MCF 10A (cell line): ENCODE measurements at regions of chr11 and their contacts with region 1.

Region 1: DNA sequence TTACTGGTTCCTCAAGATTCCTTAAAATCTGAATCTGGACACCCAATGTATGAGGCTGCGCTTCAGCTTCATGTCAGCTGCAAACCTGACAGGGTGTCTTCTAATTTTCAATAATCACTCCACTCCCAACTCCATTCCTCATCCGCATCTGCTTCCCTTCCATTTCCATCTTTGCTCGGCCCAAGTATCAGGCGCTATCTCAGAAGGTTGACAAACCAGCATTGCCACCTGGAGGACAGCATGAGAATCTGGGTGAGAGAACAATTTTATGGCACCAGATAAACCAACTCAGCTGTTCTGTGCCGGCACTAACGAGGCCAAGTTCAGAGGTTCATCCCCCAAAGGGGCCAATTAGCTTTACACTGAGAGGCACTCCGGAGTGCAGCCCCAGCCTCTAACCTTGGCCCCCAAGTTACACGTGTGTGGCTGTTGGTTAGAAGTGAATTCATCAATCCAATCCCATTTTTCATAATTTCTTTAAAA is 79.1 kb upstream of the LMO2 start:
- DNase-seq: peak; percentile 66
- H3K4me3 Mint-ChIP-seq: no peak overlapping the region
- H3K27ac Mint-ChIP-seq: no peak overlapping the region
- H3K4me1 Mint-ChIP-seq: no peaks in the 10 kb centered on the region
- H3K27me3 Mint-ChIP-seq: no peaks in the 10 kb centered on the region
- CTCF ChIP-seq: peak; percentile 55

Region 2: GRCh38 chr11:33835143-33835878 is 135.7 kb before region 1 on chr11:
- CTCF ChIA-PET with region 1: interaction called, 27 read pairs
- POLR2A ChIA-PET with region 1: interaction called, 3 read pairs
- intact Hi-C with region 1: loop called (anchors 1 kb)
- DNase-seq: peak; percentile 59
- H3K4me3 Mint-ChIP-seq: no peak overlapping the region
- H3K27ac Mint-ChIP-seq: no peak overlapping the region
- H3K4me1 Mint-ChIP-seq: peaks cover 12% of the 10 kb centered on the region
- H3K27me3 Mint-ChIP-seq: peaks cover 20% of the 10 kb centered on the region
- CTCF ChIP-seq: peak; percentile 45

Region 3: DNA sequence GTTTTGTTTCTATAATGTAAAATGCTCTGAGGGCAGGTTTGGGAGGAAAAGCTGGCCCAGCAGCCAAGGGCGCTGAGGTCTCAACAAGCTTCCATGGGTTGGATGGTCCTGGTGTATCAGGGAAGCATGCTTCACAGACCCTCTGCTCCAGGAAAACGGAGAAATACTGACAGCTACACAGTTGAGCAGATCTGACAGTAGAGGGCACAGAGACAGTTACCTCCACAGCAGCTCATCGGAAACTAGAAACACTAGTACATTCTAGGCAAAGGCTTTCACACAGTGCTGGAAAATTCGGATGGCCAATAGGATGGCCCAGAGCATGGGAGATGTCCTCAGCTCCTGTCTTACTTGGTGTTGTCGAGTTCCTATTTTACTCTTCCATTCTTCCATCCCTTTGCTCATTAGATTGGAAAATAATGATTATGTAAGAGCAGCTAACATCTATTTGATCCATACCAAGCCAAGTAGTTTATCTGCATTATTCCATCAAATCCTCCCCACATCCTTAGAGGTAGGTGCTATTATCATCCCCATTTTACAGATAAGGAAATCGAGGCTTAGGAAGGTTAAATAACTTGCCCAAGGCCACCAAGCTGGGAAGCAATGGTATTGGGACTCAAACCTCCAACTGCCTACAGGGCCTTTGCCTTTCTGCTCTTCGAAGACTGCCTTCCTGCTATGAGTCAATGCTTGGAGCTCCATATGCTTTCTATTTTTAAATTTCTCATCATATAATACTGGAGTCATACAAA is 107.4 kb before region 1 on chr11:
- CTCF ChIA-PET with region 1: interaction called, 119 read pairs
- POLR2A ChIA-PET with region 1: no interaction called
- intact Hi-C with region 1: loop called (anchors 1 kb)
- DNase-seq: no peak
- H3K4me3 Mint-ChIP-seq: no peak overlapping the region
- H3K27ac Mint-ChIP-seq: no peak overlapping the region
- H3K4me1 Mint-ChIP-seq: no peaks in the 10 kb centered on the region
- H3K27me3 Mint-ChIP-seq: no peaks in the 10 kb centered on the region
- CTCF ChIP-seq: no peak

Region 4: GRCh38 chr11:33874910-33875490 is 96.0 kb before region 1 on chr11:
- CTCF ChIA-PET with region 1: interaction called, 11 read pairs
- POLR2A ChIA-PET with region 1: interaction called, 4 read pairs
- intact Hi-C with region 1: no loop called
- DNase-seq: no peak
- H3K4me3 Mint-ChIP-seq: no peak overlapping the region
- H3K27ac Mint-ChIP-seq: no peak overlapping the region
- H3K4me1 Mint-ChIP-seq: no peaks in the 10 kb centered on the region
- H3K27me3 Mint-ChIP-seq: peaks cover 17% of the 10 kb centered on the region
- CTCF ChIP-seq: no peak

Region 5: GRCh38 chr11:35021589-35021988 is 1050.6 kb after region 1 on chr11:
- CTCF ChIA-PET with region 1: no interaction called
- POLR2A ChIA-PET with region 1: no interaction called
- intact Hi-C with region 1: no loop called
- DNase-seq: no peak
- H3K4me3 Mint-ChIP-seq: no peak overlapping the region
- H3K27ac Mint-ChIP-seq: no peak overlapping the region
- H3K4me1 Mint-ChIP-seq: no peaks in the 10 kb centered on the region
- H3K27me3 Mint-ChIP-seq: no peaks in the 10 kb centered on the region
- CTCF ChIP-seq: no peak